ENCODE measurements at regions of chr3 and their contacts with region 1.

Region 1: DNA sequence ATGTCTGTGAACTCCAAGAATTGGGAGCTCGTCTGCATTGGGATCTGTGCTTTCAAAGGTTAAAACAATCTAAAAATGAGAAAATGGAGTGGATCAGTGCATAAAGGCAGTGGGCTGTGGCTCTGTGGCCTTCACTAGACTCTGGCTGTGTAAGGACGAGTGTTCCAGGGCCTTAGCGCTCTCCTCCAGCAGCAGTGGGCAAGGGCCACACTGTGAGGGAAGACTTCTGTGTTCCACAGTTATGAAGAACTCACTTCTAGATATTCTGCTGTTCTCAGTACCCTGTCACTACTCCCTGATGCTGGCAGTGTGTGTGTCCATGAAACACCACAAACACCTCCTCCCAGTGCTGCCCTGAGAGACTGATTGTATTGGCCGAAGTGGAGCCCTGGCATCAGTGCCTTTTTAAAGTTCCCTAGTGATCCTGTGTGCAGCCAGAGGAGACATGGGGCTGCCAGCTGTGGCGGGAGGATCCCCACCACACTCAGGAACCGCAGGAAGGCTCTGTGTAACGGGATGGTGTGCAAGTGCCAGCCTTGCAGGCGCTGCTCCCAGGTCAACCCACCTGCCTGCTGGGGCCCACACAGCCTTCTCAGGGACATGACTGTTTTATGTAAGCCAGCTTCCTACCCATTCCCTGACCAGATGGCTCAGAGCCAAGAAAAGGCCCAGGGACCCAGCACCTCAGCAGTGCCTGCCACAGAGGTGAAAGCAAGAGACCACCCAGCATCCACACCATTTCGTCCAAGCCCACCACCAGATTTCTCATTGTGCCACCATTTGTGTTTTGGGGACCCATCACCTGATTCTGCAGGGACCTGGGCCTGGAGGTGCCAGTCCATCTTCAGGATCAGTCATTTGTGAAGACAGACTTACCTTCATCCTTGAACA is 40.4 kb downstream of the ABTB1 start:
- DNase-seq: peak in 3 of 10 donors; percentile 21 to 32 (median 32)
- H3K4me3 ChIP-seq: no peak overlapping the region
- H3K27ac ChIP-seq: peak overlapping the region in 50 of 59 donors; percentile 3 to 91 (median 62)
- H3K27me3 ChIP-seq: no peaks in the 10 kb centered on the region
- CTCF ChIP-seq: no peak

Region 2: GRCh38 chr3:127690823-127691452 is 22.2 kb before region 1 on chr3:
- intact Hi-C with region 1: loop called in 1 of 2 experiments (anchors 1 kb)
- DNase-seq: peak in 4 of 10 donors; percentile 43 to 47 (median 44)
- H3K4me3 ChIP-seq: no peak overlapping the region
- H3K27ac ChIP-seq: peak overlapping the region in 53 of 59 donors; percentile 14 to 90 (median 75)
- H3K27me3 ChIP-seq: no peaks in the 10 kb centered on the region
- CTCF ChIP-seq: peak in 50 of 56 donors; percentile 10 to 58 (median 40)